Activated naive CD4-positive, alpha-beta T cell treated with anti-CD3 and anti-CD28 coated beads for 36 hours (primary cell): ENCODE measurements at regions of chr19 and their contacts with region 1.

Region 1: DNA sequence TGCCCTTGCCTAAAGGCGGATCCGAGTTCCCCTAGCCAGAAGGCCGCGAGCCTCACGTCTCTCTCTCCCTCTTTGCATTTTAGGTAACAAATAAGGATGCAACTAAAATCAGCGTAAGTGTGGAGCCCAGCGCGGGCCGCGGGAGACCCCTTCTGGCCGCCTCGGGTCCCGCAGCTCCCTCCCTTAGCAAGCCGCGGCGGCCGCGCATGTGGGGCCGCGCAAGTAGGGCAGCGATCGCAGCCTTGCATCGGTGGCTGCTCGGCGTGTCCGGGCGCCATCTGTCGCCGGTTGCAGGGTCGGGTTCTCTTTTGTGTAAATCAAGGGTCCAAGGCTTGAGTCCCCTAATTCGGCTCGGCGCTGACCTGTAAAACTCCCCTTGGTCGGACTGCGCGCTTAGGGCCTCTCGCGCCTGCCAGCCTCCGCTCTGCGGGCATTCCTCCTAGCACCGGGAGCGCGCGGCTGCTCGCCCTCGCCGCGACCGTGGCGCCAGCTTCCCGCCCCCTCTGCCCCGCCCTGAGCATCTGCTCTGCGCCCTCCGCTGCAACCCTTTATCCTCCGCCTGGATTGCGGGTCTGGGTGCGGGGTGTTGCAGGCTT is 2.7 kb downstream of the VSTM2B start:
- DNase-seq: peak; percentile 81
- H3K4me3 Mint-ChIP-seq: peak overlapping the region; percentile 49
- H3K27ac Mint-ChIP-seq: no peak overlapping the region
- H3K4me1 Mint-ChIP-seq: peaks cover 29% of the 10 kb centered on the region
- H3K27me3 Mint-ChIP-seq: peaks cover 67% of the 10 kb centered on the region

Region 2: DNA sequence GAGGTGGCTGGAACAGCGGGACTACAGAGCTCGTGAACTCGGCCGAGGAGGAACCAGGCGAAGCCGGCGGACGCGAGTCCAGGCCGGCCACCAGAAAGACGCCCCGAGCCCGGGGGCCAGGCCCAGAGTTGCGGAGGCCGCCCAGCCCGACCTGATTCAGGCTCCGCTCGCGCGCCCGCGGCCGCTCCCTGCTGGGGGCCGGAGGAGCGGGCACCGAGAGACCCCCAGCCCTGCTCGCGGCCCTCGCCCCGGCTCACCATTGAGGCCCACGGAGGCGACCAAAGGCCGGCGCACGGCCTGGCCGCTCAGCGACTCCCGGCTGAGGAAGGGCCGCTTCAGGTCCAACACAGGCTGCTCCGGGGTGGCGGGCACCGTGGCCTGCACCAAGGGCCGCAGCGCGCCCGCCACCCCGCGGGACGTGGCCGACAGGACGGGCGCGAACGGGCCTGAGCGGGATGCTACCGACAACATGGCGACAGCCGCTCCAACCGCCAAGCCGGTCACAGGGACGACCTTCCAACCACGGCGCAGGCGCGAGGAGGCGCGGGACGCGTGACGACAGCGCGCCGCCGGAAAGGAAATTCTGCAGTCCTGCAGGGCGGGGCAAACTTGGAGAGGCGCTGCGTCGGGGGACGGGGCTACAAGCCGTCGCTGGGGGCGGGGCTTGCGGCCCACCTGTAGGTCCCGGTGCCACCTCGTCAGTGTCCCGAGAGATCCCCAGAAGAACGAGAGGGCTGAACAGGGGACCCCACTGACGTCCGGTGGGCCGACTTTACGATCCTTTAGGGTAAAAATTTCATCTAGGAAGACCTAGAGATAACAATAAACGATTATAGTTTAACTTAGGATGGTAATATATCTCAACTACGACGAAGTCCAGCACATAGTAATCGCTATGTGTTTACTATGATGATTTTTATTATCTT is 315.5 kb before region 1 on chr19 and contains the start of gene UQCRFS1:
- CTCF ChIA-PET with region 1: no interaction called
- intact Hi-C with region 1: loop called (anchors 2 kb)
- DNase-seq: peak; percentile 97
- H3K4me3 Mint-ChIP-seq: peak within 1 kb of the TSS; percentile 96
- H3K27ac Mint-ChIP-seq: peak within 1 kb of the TSS; percentile 96
- H3K4me1 Mint-ChIP-seq: peaks cover 40% of the 10 kb centered on the region
- H3K27me3 Mint-ChIP-seq: no peaks in the 10 kb centered on the region
- total RNA-seq, gene UQCRFS1: 46.8 to 47.6 TPM

Region 3: GRCh38 chr19:29277102-29277501 is 251.3 kb before region 1 on chr19:
- CTCF ChIA-PET with region 1: no interaction called
- intact Hi-C with region 1: loop called (anchors 5 kb)
- DNase-seq: peak; percentile 77
- H3K4me3 Mint-ChIP-seq: no peak overlapping the region
- H3K27ac Mint-ChIP-seq: no peak overlapping the region
- H3K4me1 Mint-ChIP-seq: peaks cover 6% of the 10 kb centered on the region
- H3K27me3 Mint-ChIP-seq: peaks cover 12% of the 10 kb centered on the region

Region 4: DNA sequence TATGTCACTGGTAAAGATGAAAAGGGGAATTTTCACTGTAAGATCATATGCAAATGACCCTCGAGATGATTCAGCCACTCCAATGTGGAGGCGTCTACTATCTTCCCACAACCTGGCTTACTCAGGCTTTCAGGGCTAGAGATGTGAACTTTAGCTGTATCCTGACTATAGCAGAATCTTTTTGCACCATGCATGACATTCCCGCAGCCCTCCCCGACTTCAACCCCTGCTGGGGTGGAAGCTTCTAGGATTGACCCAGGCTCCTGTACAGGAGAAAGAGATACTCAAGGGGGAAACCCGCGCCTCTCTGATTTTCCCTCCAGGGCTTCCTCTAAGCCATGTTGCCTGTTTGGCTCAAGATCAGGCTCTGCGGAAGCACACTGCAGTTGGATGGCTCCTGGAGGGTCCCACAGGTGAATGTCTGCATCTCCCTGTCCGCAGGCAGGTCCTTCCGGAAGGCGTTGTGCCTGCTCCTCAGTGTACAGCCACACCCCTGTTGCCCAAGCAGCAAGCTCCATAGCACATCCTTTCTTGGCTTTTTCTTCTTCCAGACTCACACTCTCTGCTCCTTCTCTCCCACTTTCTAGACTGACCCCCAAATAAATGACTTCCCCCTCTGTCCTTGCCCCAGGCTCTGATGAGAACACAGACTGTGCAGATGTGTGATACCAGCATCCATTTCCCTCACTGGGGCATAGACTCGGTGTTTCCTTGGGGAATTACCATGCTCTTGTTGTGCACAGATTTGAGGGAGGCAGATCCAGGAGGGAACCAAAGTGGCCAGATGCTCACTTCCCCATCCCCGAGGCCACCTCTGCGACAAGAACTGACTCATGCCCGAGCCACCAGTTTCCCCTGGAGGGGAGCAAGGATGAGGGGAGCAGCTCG is 48.6 kb after region 1 on chr19:
- CTCF ChIA-PET with region 1: no interaction called
- intact Hi-C with region 1: loop called (anchors 1 kb)
- DNase-seq: peak; percentile 70
- H3K4me3 Mint-ChIP-seq: no peak overlapping the region
- H3K27ac Mint-ChIP-seq: no peak overlapping the region
- H3K4me1 Mint-ChIP-seq: peaks cover 24% of the 10 kb centered on the region
- H3K27me3 Mint-ChIP-seq: peaks cover 50% of the 10 kb centered on the region

Region 5: GRCh38 chr19:30227661-30228428 is 699.4 kb after region 1 on chr19:
- CTCF ChIA-PET with region 1: no interaction called
- intact Hi-C with region 1: loop called (anchors 2 kb)
- DNase-seq: peak; percentile 70
- H3K4me3 Mint-ChIP-seq: peak overlapping the region; percentile 79
- H3K27ac Mint-ChIP-seq: no peak overlapping the region
- H3K4me1 Mint-ChIP-seq: peaks cover 33% of the 10 kb centered on the region
- H3K27me3 Mint-ChIP-seq: peaks cover 58% of the 10 kb centered on the region